ENCODE measurements at regions of chr12 and their contacts with region 1.

Region 1: DNA sequence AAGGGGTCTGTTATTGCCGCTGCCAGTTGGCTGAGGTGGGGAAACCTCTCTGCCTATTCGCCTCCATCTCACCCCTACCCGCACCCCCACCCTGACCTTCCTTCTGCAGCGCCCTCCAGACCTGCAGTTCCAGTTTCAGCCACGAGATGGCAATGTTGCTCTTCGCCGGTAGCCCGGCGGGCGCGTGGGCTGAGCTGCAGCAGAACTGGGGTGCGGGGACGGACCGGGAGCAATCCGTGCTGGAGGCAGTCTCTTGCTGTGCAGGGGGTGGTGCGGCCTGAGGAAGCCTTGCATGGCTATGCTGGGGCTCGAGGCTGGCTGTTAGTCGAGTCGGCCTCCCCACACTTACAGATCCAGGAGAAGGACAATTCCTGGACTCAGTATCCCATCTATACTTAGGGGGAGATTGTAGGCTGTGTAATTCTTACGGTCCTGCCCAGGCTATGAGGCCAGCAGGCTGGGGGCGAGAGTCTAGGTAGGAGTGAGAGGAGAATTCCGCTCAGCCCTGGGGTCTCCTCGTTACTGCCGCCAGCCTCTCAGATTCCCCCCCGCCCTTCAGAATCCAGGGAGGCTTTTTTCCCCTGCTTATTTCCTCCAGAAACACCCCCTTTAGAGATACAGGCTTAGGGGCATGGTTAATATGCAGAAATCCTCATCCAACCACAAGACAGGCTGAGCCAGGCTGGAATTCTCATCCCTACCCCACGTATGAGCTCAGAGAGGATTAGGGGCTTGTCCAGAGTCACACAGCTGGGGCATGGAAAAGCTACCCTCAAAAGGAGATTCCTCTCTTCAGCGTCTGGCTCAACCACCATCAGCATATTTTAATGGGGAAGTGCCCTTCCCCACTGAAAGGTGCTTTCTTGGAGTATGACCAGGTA is 118.2 kb downstream of the AACS start:
- ATAC-seq: peak; percentile 47 to 70 (median 60)
- H3K4me3 ChIP-seq: no peak overlapping the region
- H3K27ac ChIP-seq: no peak overlapping the region
- H3K4me1 ChIP-seq: peaks cover 2 to 3% of the 10 kb centered on the region in 2 donors

Region 2: DNA sequence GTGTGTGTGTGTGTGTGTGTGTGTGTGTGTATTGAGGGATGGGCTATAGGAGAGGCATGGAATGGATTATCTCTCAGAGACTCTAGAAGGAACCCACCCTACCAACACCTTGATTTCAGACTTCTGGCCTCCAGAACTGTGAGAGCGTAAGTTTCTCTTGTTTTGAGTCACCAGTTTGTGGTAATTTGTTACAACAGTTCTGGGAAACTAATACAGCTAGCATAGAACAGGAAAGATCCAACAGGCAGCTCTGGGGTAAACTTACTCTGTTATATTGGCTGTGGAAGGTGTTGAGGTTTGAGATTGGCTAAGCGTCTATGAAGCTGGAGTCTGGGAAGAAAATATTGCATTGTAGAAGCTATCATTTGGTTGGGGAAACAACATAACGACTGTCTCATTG is 216.1 kb after region 1 on chr12:
- in situ Hi-C with region 1: loop called in 1 of 9 experiments (anchors 10 kb)
- ATAC-seq: no peak
- H3K4me3 ChIP-seq: no peak overlapping the region
- H3K27ac ChIP-seq: no peak overlapping the region
- H3K4me1 ChIP-seq: no peaks in the 10 kb centered on the region

Region 3: GRCh38 chr12:125922328-125922727 is 738.9 kb after region 1 on chr12:
- in situ Hi-C with region 1: no loop called
- ATAC-seq: no peak
- H3K4me3 ChIP-seq: no peak overlapping the region
- H3K27ac ChIP-seq: no peak overlapping the region
- H3K4me1 ChIP-seq: no peaks in the 10 kb centered on the region